Tibial artery (tissue), 4 donors: ENCODE measurements at regions of chr20 and their contacts with region 1.

Region 1: GRCh38 chr20:577167-577791 is 32.8 kb downstream of the TCF15 start:
- DNase-seq: no peak
- H3K4me3 ChIP-seq: no peak overlapping the region
- H3K27ac ChIP-seq: no peak overlapping the region
- H3K4me1 ChIP-seq: peaks cover 0 to 4% (median under 1%) of the 10 kb centered on the region in 4 donors
- H3K27me3 ChIP-seq: peaks cover 0 to 21% of the 10 kb centered on the region in 2 donors
- CTCF ChIP-seq: no peak

Region 2: DNA sequence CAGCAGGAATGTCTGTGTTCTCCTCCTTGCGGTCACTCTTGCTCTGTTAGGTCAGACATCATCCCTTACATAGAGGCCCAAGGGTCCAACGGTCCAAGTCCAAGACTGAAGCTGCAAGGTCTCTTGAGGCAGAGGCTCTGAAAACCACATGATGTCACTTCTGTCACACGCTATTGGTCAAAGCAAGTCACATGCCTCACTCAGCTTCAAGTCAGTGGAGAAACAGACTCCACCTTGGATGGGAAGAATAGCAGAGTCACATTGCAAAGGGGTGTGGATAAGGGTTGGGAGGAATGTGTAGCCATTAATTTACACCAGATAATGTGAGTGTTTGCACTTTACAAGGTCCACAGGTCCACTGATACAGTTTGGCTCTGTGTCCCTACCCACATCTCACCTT is 173.5 kb after region 1 on chr20:
- intact Hi-C with region 1: no loop called
- DNase-seq: no peak
- H3K4me3 ChIP-seq: no peak overlapping the region
- H3K27ac ChIP-seq: no peak overlapping the region
- H3K4me1 ChIP-seq: no peaks in the 10 kb centered on the region
- H3K27me3 ChIP-seq: no peaks in the 10 kb centered on the region
- CTCF ChIP-seq: no peak

Region 3: DNA sequence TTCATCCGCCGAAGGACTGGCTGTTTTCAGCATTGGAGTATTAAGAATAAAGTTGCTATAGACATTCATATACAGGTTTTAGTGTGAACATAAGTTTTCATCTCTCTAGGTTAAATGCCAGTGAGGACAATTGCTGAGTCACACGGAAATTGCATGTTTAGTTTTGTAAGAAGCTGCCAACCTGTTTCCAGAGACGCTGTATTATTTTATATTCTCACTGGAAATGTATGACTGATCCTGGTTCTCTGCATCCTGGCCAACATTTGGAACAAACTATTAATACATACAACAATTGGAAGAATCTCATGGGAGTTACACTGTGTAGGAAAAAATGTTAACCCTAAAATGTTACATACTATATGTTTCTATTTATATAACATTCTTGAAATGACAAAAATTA is 1786.8 kb after region 1 on chr20:
- intact Hi-C with region 1: loop called (anchors 10 kb)
- DNase-seq: no peak
- H3K4me3 ChIP-seq: no peak overlapping the region
- H3K27ac ChIP-seq: no peak overlapping the region
- H3K4me1 ChIP-seq: no peaks in the 10 kb centered on the region
- H3K27me3 ChIP-seq: no peaks in the 10 kb centered on the region
- CTCF ChIP-seq: no peak